ENCODE measurements at regions of chr5 and their contacts with region 1.

Region 1: DNA sequence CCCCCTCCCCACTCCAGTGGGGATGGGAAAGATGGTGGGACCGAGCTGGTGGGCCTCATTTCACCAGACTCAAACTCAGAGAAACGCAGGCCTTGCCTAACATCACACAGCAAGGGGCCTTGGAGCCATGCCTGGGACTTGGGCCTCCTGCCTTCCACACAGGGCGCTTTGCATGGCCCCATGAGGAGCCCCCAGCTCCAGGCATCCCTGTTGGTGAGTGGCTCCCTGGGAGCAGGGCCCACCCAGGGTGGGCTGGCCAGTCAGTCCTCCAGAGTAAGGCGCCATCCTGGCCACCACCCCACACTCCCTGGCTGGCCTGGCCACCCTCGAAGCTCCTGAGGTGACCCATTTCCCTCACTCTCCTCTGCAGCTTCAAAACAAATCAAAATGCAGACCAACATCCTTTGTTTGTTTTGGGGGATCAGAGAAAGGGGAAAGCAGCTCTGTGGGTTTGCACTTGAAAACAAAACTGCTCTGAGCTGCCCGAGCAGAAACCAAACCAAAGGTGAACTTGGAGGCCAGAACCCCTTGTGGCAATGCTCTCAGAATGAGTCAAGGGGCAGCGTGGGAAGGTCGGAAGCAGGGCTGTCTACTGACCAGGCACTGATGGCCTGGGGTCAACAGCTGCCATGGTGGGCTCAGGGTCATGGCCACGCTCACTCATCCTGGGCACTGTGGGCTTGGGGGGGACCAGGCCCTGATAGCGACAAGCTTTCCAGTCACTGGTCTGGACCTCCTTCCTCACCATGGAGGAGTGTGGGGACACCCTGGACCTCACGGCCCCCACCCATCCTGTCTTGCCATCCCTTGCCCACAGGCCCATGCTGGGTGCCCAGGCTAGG is 37.0 kb upstream of the VDAC1 start:
- DNase-seq: peak; percentile 41
- ATAC-seq: peak; percentile 32
- H3K4me3 Mint-ChIP-seq: no peak overlapping the region
- H3K27ac Mint-ChIP-seq: no peak overlapping the region
- H3K4me1 Mint-ChIP-seq: peaks cover 32% of the 10 kb centered on the region
- H3K27me3 Mint-ChIP-seq: no peaks in the 10 kb centered on the region
- CTCF ChIP-seq: no peak

Region 2: GRCh38 chr5:133635051-133635450 is 406.7 kb before region 1 on chr5:
- CTCF ChIA-PET with region 1: no interaction called
- POLR2A ChIA-PET with region 1: no interaction called
- intact Hi-C with region 1: no loop called
- DNase-seq: no peak
- ATAC-seq: no peak
- H3K4me3 Mint-ChIP-seq: no peak overlapping the region
- H3K27ac Mint-ChIP-seq: no peak overlapping the region
- H3K4me1 Mint-ChIP-seq: no peaks in the 10 kb centered on the region
- H3K27me3 Mint-ChIP-seq: peaks cover 27% of the 10 kb centered on the region
- CTCF ChIP-seq: no peak

Region 3: GRCh38 chr5:134018154-134018985 is 23.4 kb before region 1 on chr5:
- CTCF ChIA-PET with region 1: interaction called, 16 read pairs
- POLR2A ChIA-PET with region 1: no interaction called
- intact Hi-C with region 1: no loop called
- DNase-seq: no peak
- ATAC-seq: no peak
- H3K4me3 Mint-ChIP-seq: no peak overlapping the region
- H3K27ac Mint-ChIP-seq: no peak overlapping the region
- H3K4me1 Mint-ChIP-seq: no peaks in the 10 kb centered on the region
- H3K27me3 Mint-ChIP-seq: no peaks in the 10 kb centered on the region
- CTCF ChIP-seq: no peak

Region 4: DNA sequence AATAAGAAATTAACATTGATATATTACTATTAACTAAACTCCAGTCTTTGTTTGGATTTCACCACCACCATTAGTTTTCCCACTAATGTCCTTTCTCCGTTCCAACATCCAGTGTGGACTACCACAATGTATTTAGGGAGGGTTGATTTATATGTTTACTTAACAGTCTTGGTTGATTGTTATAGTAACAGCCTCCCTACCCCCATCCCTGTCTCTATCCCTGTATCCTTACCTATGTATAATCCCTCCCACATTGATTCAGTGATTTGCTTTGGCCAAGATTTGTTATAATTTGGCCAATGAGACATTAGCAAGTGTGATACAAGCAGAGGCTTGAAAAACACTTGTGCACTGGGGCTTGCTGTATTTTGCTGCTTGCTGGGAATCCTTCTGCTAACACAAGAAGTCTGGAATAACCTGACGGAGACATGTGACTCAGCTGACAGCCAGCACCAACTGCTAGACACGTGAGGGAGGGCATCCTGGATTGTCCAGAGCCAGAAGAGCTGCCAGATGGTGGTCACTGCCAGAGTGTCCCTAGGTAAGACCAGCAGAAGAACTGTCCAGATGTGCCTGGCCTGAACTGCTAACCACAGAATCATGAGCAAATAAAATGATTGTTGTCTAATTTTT is 21.5 kb after region 1 on chr5:
- CTCF ChIA-PET with region 1: interaction called, 75 read pairs
- POLR2A ChIA-PET with region 1: interaction called, 5 read pairs
- intact Hi-C with region 1: no loop called
- DNase-seq: no peak
- ATAC-seq: no peak
- H3K4me3 Mint-ChIP-seq: no peak overlapping the region
- H3K27ac Mint-ChIP-seq: no peak overlapping the region
- H3K4me1 Mint-ChIP-seq: peaks cover 22% of the 10 kb centered on the region
- H3K27me3 Mint-ChIP-seq: no peaks in the 10 kb centered on the region
- CTCF ChIP-seq: no peak

Region 5: DNA sequence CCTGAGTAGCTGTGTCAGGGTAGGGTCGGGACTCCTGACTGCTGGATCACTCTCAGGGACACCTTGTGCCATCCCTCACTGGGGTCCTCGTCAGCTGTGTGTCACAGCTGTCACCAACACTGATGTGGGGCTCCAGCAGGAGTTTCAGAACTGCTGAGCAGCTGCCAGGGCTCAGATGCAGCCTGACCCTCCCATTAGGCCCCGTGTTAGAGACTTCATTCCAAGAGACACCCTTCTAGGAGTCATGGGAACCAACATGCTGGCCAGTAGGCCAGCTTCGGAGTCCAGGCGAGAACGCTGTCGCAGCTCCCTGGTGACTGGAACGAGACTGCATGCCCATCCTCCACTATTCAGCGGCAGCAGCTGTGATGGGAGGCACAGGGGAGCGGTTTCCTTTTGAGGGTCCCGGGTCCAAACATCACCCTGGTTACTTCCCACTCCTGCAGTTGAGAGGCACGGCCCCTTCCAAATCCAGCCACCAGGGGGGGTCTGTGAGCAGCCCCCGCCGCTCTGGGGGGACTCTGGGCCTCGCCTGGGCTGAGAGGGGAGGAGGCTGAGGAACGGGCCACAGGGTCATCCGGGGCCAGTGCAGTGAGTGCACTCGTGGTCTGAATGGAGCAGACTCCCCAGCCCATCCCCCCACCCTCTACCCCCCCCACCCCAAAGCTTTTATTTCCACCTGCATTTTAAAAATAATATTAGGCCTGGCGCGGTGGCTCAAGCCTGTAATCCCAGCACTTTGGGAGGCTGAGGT is 60.1 kb after region 1 on chr5:
- CTCF ChIA-PET with region 1: no interaction called
- POLR2A ChIA-PET with region 1: interaction called, 22 read pairs
- intact Hi-C with region 1: loop called (anchors 5 kb)
- DNase-seq: peak; percentile 82
- ATAC-seq: peak; percentile 31
- H3K4me3 Mint-ChIP-seq: no peak overlapping the region
- H3K27ac Mint-ChIP-seq: peak overlapping the region; percentile 11
- H3K4me1 Mint-ChIP-seq: peaks cover 86% of the 10 kb centered on the region
- H3K27me3 Mint-ChIP-seq: no peaks in the 10 kb centered on the region
- CTCF ChIP-seq: peak; percentile 88

Region 6: GRCh38 chr5:134140530-134141201 is 98.9 kb after region 1 on chr5:
- CTCF ChIA-PET with region 1: interaction called, 1,049 read pairs
- POLR2A ChIA-PET with region 1: interaction called, 43 read pairs
- intact Hi-C with region 1: loop called (anchors 1 kb)
- DNase-seq: peak; percentile 80
- ATAC-seq: peak; percentile 48
- H3K4me3 Mint-ChIP-seq: no peak overlapping the region
- H3K27ac Mint-ChIP-seq: peak overlapping the region; percentile 46
- H3K4me1 Mint-ChIP-seq: peaks cover 72% of the 10 kb centered on the region
- H3K27me3 Mint-ChIP-seq: no peaks in the 10 kb centered on the region
- CTCF ChIP-seq: peak; percentile 90

Region 7: GRCh38 chr5:134176511-134177368 is 134.9 kb after region 1 on chr5 and contains the start of gene SKP1:
- CTCF ChIA-PET with region 1: interaction called, 15 read pairs
- POLR2A ChIA-PET with region 1: interaction called, 5 read pairs
- intact Hi-C with region 1: no loop called
- DNase-seq: peak; percentile 86
- ATAC-seq: peak; percentile 87
- H3K4me3 Mint-ChIP-seq: peak within 1 kb of the TSS; percentile 82
- H3K27ac Mint-ChIP-seq: peak within 1 kb of the TSS; percentile 94
- H3K4me1 Mint-ChIP-seq: peaks cover 26% of the 10 kb centered on the region
- H3K27me3 Mint-ChIP-seq: no peaks in the 10 kb centered on the region
- CTCF ChIP-seq: no peak
- total RNA-seq, gene SKP1: 235 to 242 TPM